Activated CD4-positive, alpha-beta T cell treated with anti-CD3 and anti-CD28 coated beads for 36 hours (primary cell): ENCODE measurements at regions of chr11 and their contacts with region 1.

Region 1: GRCh38 chr11:56776809-56777208 is 28.3 kb upstream of the OR9G4 start:
- DNase-seq: no peak
- ATAC-seq: no peak
- H3K4me3 Mint-ChIP-seq: no peak overlapping the region
- H3K27ac Mint-ChIP-seq: no peak overlapping the region
- H3K4me1 Mint-ChIP-seq: no peaks in the 10 kb centered on the region
- H3K27me3 Mint-ChIP-seq: no peaks in the 10 kb centered on the region

Region 2: DNA sequence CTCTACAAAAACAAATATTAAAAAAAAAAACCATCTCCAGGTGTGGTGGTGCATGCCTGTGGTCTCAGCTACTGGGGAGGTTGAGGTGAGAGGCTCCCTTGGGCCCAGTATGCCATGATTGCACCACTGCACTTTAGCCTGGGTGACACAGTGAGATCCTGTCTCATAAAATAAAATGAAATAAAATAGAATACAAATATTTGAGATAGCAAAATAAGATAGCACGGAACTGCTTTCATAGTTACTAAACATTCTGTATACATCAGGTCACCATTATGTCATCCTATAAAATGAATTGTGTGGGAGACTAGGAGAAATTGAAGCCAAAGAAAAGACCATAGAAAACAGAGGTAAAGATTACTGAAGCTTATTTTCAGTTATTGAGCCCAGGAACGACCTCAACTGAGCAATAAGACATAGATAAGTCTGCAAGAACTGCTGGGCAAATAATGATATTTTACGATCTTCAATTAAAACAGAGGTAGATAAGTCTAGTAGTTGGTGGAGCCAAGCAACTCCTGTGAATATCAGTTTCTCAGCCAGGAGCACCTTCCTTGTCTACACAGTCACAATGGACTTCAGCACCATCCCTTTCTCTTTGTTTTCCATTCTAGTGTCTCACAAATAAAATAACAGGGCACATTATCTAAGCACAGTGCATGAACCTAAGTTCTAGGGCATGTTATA is 243.6 kb before region 1 on chr11:
- CTCF ChIA-PET with region 1: no interaction called
- POLR2A ChIA-PET with region 1: no interaction called
- intact Hi-C with region 1: loop called in 1 of 2 experiments (anchors 10 kb)
- DNase-seq: no peak
- ATAC-seq: no peak
- H3K4me3 Mint-ChIP-seq: no peak overlapping the region
- H3K27ac Mint-ChIP-seq: no peak overlapping the region
- H3K4me1 Mint-ChIP-seq: no peaks in the 10 kb centered on the region
- H3K27me3 Mint-ChIP-seq: no peaks in the 10 kb centered on the region

Region 3: DNA sequence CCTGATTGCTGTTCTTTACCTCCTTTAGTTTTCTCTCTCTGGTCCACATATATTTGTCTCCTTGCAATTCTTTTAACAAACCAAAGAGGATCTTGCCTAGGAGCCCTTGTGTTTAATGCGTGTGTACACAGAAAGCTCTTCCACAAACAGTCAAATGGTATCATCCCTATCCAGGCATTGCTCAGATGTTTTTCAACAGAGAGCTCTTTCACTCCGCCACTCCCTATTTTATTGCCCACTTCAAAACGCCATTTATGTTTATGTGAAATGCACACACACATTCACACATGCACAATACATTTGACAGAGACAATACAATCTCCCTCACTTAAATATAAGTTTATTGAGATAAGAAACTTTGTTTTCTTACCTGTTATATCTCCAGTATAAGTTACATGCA is 139.3 kb before region 1 on chr11:
- CTCF ChIA-PET with region 1: no interaction called
- POLR2A ChIA-PET with region 1: no interaction called
- intact Hi-C with region 1: no loop called
- DNase-seq: no peak
- ATAC-seq: no peak
- H3K4me3 Mint-ChIP-seq: no peak overlapping the region
- H3K27ac Mint-ChIP-seq: no peak overlapping the region
- H3K4me1 Mint-ChIP-seq: no peaks in the 10 kb centered on the region
- H3K27me3 Mint-ChIP-seq: no peaks in the 10 kb centered on the region

Region 4: DNA sequence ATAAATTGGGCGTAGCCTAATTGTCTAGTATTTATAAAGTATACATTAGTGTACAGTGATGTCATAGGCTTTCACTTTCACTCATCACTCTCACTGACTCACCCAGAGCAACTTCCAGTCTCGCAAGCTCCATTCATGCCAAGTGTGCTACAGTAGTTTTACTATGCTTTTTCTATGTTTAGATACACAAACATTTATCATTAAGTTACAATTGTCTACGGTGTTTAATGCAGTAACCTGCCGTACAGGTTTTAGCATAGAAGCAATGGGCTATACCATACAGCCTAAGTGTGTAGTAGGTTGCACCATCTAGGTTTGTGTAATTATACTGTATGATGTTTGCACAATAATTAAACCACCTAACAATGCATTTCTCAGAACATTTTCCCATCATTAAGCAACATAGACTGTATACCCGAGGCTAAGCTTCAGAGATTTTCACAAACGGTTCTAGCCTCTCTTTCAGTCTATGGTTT is 60.4 kb before region 1 on chr11:
- CTCF ChIA-PET with region 1: no interaction called
- POLR2A ChIA-PET with region 1: no interaction called
- intact Hi-C with region 1: loop called in 1 of 2 experiments (anchors 10 kb)
- DNase-seq: peak; percentile 8
- ATAC-seq: peak; percentile 57
- H3K4me3 Mint-ChIP-seq: no peak overlapping the region
- H3K27ac Mint-ChIP-seq: no peak overlapping the region
- H3K4me1 Mint-ChIP-seq: no peaks in the 10 kb centered on the region
- H3K27me3 Mint-ChIP-seq: no peaks in the 10 kb centered on the region

Region 5: GRCh38 chr11:57001674-57002401 is 225.0 kb after region 1 on chr11:
- CTCF ChIA-PET with region 1: no interaction called
- POLR2A ChIA-PET with region 1: no interaction called
- intact Hi-C with region 1: no loop called
- DNase-seq: peak; percentile 7
- ATAC-seq: no peak
- H3K4me3 Mint-ChIP-seq: no peak overlapping the region
- H3K27ac Mint-ChIP-seq: no peak overlapping the region
- H3K4me1 Mint-ChIP-seq: no peaks in the 10 kb centered on the region
- H3K27me3 Mint-ChIP-seq: no peaks in the 10 kb centered on the region